GM10248 (cell line): ENCODE measurements at regions of chr4 and their contacts with region 1.

Region 1: DNA sequence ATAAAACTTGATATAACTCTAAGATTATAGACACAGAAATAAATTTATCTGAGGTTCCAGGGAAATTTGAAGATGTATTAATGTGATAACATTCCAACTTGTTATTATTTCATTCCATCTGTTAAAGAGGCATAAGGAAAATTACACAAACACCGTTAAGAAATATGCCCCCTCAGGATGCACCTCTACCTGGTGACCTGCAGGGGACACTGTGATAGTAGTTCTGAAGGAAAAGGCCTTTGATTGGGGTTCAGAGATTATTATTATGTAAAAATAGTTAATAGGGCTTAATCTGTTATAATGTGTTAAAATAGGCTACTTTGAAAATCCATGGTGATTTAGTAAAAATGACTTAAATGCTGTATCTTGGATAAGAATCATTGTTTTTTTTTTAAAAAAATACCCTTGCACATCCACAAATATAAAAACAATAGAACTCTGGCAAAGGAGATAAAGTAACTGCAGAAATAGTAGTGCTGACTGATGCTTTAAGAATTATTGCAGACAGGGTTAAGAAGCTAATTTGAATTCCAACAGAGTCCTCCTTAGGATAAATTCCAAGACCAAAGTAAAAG is 6.1 kb upstream of the ABRAXAS1 start:
- DNase-seq: peak; percentile 54
- CTCF ChIP-seq: peak; percentile 74

Region 2: GRCh38 chr4:83510442-83510841 is 19.5 kb after region 1 on chr4:
- CTCF ChIA-PET with region 1: interaction called, 32 read pairs
- POLR2A ChIA-PET with region 1: no interaction called
- DNase-seq: no peak
- CTCF ChIP-seq: no peak